MCF 10A (cell line): ENCODE measurements at regions of chr11 and their contacts with region 1.

Region 1: DNA sequence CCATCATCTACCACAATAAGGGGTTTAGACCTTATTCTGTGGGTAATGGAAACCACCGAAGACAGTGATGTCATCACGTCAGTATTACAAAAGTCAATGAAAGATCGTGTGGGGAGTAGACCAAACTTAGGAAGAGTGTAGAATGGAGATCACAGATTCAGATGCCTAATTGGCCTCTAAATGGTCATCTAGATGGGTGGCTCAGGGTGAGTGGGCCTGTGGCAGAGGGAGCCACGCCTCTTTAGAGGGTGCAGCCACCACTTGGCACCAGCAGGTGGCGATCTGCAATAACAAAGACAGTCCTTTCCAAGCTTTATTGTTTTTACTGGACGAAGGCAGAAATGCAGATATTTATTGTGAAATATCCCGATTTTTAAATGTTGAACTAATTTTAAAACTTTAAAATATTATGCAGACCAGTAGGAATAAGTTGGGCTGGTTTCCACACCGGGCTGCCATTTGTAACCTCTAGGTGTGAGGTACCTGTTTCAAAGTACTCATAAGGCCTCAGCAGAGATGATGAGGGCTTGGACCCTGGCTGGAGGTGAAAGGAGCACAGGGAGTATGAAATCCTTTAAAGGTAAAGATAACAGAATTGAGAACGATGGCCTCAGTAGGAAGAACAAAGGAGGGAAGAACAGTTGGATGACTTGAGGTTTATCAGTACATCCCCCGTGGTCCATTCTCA is 222.0 kb downstream of the DBX1 start:
- DNase-seq: peak; percentile 72
- H3K4me3 Mint-ChIP-seq: no peak overlapping the region
- H3K27ac Mint-ChIP-seq: peak overlapping the region; percentile 47
- H3K4me1 Mint-ChIP-seq: peaks cover 24% of the 10 kb centered on the region
- H3K27me3 Mint-ChIP-seq: no peaks in the 10 kb centered on the region
- CTCF ChIP-seq: peak; percentile 80

Region 2: DNA sequence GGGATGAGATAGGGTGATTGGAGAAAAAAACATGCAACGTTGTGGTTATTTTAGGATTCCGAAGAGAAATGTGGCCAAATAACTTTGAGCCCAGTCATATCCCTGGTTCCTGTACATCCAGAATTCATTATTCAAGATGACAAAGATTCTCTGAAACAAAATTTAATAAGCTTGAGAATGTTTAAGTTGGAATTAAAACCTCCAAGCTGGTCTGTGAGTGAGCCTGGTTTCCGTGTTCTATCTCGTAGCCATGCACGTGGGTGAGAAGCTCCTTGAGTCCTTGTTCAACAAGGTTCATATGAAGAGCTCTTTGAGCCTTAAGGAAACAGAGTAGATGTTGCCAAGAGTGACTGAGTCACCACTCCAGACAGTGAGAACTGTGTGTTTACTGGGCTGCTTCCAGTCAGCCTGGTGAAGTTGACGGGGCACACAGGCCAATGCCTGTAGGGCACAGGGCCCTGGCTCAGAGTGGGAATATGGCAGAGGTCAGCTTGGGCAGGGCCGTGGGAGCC is 19.2 kb before region 1 on chr11:
- CTCF ChIA-PET with region 1: interaction called, 16 read pairs
- POLR2A ChIA-PET with region 1: interaction called, 3 read pairs
- intact Hi-C with region 1: no loop called
- DNase-seq: peak; percentile 98
- H3K4me3 Mint-ChIP-seq: peak overlapping the region; percentile 63
- H3K27ac Mint-ChIP-seq: peak overlapping the region; percentile 94
- H3K4me1 Mint-ChIP-seq: peaks cover 32% of the 10 kb centered on the region
- H3K27me3 Mint-ChIP-seq: no peaks in the 10 kb centered on the region
- CTCF ChIP-seq: no peak

Region 3: GRCh38 chr11:19995131-19995530 is 56.8 kb after region 1 on chr11:
- CTCF ChIA-PET with region 1: no interaction called
- POLR2A ChIA-PET with region 1: no interaction called
- intact Hi-C with region 1: no loop called
- DNase-seq: peak; percentile 95
- H3K4me3 Mint-ChIP-seq: peak overlapping the region; percentile 73
- H3K27ac Mint-ChIP-seq: peak overlapping the region; percentile 99
- H3K4me1 Mint-ChIP-seq: peaks cover 36% of the 10 kb centered on the region
- H3K27me3 Mint-ChIP-seq: no peaks in the 10 kb centered on the region
- CTCF ChIP-seq: no peak

Region 4: GRCh38 chr11:20337526-20338154 is 399.3 kb after region 1 on chr11:
- CTCF ChIA-PET with region 1: no interaction called
- POLR2A ChIA-PET with region 1: interaction called, 3 read pairs
- intact Hi-C with region 1: loop called (anchors 1 kb)
- DNase-seq: peak; percentile 46
- H3K4me3 Mint-ChIP-seq: no peak overlapping the region
- H3K27ac Mint-ChIP-seq: no peak overlapping the region
- H3K4me1 Mint-ChIP-seq: no peaks in the 10 kb centered on the region
- H3K27me3 Mint-ChIP-seq: peaks cover 97% of the 10 kb centered on the region
- CTCF ChIP-seq: peak; percentile 42